Activated naive CD4-positive, alpha-beta T cell treated with anti-CD3 and anti-CD28 coated beads for 36 hours (primary cell): ENCODE measurements at regions of chr6 and their contacts with region 1.

Region 1: DNA sequence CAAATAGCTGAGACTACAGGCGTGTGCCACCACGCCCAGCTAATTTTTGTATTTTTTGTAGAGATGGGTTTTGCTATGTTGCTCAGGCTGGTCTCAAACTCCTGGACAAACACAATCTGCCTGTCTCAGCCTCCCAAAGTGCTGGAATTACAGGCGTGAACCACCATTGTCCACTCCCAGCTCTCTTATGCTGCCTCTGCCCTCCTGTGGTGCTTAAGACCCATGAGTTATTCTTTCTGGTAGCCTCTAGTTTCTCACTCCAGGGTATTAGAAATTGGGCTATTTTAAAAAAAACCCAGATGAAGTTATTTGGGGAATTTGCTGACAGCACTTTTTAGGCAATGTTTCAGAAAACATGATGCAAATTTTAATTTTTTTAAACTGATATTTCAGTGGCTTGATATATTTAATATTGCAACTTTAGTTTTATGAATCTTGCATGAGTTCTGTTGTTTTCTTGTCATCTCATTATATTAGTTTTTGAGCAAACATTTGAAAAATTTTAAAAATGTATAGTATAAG is 114.0 kb upstream of the FOXO3 start:
- DNase-seq: no peak
- H3K4me3 Mint-ChIP-seq: no peak overlapping the region
- H3K27ac Mint-ChIP-seq: no peak overlapping the region
- H3K4me1 Mint-ChIP-seq: peaks cover 20% of the 10 kb centered on the region
- H3K27me3 Mint-ChIP-seq: peaks cover 11% of the 10 kb centered on the region

Region 2: DNA sequence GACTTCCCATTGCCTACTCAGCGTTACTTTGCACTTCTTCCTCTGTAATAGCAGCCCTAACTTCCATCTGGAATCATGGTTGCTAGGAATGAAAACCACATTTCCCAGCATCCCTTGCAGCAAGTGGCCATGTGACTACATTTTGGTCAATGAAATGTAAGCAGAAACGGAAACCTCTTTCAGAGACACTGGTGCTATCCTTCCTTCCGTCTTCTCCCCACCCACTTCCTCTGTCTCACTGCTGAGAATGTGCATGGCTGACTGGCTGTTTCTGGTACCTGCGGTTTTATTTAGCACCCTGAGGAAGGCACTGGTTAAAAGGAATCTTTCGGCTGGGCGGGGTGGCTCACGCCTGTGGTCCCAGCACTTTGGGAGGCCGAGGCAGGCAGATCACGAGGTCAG is 730.0 kb before region 1 on chr6:
- CTCF ChIA-PET with region 1: no interaction called
- intact Hi-C with region 1: loop called (anchors 10 kb)
- DNase-seq: peak; percentile 89
- H3K4me3 Mint-ChIP-seq: peak overlapping the region; percentile 71
- H3K27ac Mint-ChIP-seq: peak overlapping the region; percentile 93
- H3K4me1 Mint-ChIP-seq: peaks cover 65% of the 10 kb centered on the region
- H3K27me3 Mint-ChIP-seq: no peaks in the 10 kb centered on the region

Region 3: DNA sequence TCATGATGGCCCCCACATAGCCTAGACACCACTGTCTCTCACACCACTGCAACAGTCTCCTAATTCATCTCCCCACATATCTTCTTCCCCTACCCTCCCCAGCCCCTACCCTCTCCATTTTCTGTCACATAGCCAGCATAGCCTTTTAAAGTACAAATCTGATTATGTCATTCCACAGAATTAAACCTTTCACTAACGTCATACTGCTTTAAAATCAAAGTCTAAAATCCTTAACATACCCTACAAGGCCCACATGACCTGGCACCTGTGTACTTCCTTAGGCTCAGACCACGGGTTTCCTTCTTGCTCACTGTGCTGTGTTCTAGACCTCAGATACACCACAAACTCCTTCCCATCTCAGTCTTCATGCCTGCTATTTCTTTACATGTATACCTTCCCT is 378.1 kb before region 1 on chr6:
- CTCF ChIA-PET with region 1: no interaction called
- intact Hi-C with region 1: loop called (anchors 1 kb)
- DNase-seq: peak; percentile 74
- H3K4me3 Mint-ChIP-seq: no peak overlapping the region
- H3K27ac Mint-ChIP-seq: no peak overlapping the region
- H3K4me1 Mint-ChIP-seq: peaks cover 16% of the 10 kb centered on the region
- H3K27me3 Mint-ChIP-seq: no peaks in the 10 kb centered on the region

Region 4: DNA sequence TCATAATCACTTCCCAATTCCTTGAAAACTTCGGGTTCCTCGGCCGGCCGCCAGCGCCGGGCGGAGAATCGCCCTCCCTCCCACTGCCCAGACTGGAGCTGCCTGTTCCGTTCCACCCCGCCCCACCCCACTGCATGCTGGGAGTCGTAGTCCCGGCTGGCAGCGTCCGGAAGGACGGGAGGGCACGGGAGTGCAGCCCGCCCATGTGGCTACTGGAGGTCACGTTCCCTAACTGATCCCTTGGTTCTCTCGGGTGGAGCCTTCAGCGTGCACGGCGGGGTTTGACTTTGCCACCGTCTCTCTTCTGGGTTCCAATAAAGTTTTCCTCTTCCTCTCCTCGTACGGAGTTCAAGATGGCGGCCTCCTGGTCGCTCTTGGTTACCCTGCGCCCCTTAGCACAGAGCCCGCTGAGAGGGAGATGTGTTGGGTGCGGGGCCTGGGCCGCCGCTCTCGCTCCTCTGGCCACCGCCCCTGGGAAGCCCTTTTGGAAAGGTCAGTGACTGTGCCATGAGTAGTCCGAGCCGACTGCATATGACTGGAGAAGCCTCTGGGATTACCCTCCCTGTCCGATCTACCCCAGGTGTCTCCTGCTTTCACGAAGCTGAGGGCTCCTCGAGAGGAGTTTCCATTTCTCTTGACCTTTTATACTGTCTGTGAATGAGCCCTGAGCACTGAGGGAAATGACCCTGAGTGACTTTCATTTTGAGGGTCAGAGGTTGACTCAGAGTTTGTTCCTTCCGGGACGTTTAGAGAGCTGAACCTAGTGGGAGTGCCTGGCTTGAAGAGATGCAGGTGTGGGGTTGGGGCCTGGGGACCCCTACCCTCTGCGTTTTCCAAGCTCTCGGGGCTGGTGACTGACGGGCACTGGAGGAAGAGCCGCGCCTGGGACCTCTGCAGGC is 151.7 kb before region 1 on chr6 and contains the start of gene AFG1L:
- CTCF ChIA-PET with region 1: no interaction called
- intact Hi-C with region 1: loop called (anchors 1 kb)
- DNase-seq: peak; percentile 91
- H3K4me3 Mint-ChIP-seq: peak within 1 kb of the TSS; percentile 99
- H3K27ac Mint-ChIP-seq: peak within 1 kb of the TSS; percentile 100
- H3K4me1 Mint-ChIP-seq: peaks cover 19% of the 10 kb centered on the region
- H3K27me3 Mint-ChIP-seq: no peaks in the 10 kb centered on the region
- total RNA-seq, gene AFG1L: 5.4 to 5.9 TPM

Region 5: DNA sequence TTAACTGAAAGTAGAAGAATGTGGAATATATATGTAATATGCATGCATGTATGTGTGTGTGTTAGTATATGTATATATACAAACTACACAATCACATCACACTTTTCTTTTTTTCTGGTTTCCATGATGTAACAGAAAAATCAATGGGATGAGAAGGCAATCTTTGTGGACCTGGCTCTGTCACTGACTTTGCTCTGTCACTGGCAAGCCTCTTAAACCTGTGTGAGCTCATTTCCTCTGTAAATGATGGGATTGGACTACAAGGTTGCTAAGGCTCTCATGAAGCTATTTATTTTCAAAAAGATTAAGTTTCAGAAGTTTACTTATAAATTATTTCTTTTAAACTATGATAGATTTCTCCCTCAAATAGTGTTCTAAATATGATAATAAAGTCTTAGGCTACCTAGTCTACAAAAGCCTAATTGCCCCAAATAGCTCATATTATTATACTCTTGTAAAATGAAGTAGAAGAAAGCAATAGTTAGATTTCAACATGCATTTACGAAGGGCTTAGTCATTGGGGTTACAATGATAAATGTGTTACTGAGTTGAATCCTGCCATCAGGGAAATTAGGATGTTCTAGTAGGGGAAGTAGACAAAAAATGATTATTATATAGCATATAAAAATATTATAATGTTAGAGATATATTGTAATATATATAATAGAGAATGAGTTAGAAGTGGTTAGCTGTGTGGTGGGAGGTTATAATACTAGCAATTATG is 22.5 kb before region 1 on chr6:
- CTCF ChIA-PET with region 1: no interaction called
- intact Hi-C with region 1: no loop called
- DNase-seq: no peak
- H3K4me3 Mint-ChIP-seq: no peak overlapping the region
- H3K27ac Mint-ChIP-seq: no peak overlapping the region
- H3K4me1 Mint-ChIP-seq: no peaks in the 10 kb centered on the region
- H3K27me3 Mint-ChIP-seq: peaks cover 3% of the 10 kb centered on the region

Region 6: GRCh38 chr6:108476847-108477430 is 30.2 kb after region 1 on chr6:
- CTCF ChIA-PET with region 1: no interaction called
- intact Hi-C with region 1: loop called (anchors 1 kb)
- DNase-seq: no peak
- H3K4me3 Mint-ChIP-seq: no peak overlapping the region
- H3K27ac Mint-ChIP-seq: no peak overlapping the region
- H3K4me1 Mint-ChIP-seq: peaks cover 3% of the 10 kb centered on the region
- H3K27me3 Mint-ChIP-seq: peaks cover 6% of the 10 kb centered on the region

Region 7: DNA sequence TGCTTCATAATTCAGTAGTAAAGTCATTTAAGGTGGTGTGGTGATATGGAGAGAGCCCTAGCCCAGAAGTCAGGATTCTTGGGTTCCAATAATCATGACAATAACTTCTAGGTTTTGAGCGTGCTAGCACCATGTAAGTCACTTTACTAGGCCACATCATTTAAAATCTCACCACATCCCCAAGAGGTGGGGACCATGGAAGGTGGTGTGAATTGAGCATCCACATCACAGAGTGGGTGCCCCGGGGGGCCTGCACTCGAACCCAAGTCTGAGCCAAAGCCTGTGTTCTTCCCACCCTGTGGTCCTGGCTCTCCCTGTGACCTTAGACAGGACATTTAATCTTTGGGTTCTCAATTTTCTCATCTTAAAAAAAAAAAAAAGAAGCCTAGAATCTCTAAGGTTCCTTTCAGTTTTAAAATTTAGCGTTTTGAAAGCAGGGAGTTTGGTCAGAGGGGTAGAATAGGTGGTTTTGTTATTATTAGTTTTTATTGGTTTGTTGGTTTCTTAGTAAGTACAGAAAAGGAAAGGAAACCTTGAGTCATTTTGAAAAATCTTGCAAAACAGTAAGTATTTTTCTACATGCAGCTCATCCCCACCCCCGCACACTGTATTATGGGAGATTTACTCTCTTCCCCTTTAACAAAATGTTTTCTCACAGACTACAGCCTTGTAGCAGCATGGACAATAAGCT is 427.9 kb after region 1 on chr6:
- CTCF ChIA-PET with region 1: no interaction called
- intact Hi-C with region 1: loop called (anchors 1 kb)
- DNase-seq: peak; percentile 80
- H3K4me3 Mint-ChIP-seq: peak overlapping the region; percentile 20
- H3K27ac Mint-ChIP-seq: no peak overlapping the region
- H3K4me1 Mint-ChIP-seq: peaks cover 22% of the 10 kb centered on the region
- H3K27me3 Mint-ChIP-seq: peaks cover 2% of the 10 kb centered on the region